HEK293T (cell line): ENCODE measurements at regions of chr7 and their contacts with region 1.

Region 1: DNA sequence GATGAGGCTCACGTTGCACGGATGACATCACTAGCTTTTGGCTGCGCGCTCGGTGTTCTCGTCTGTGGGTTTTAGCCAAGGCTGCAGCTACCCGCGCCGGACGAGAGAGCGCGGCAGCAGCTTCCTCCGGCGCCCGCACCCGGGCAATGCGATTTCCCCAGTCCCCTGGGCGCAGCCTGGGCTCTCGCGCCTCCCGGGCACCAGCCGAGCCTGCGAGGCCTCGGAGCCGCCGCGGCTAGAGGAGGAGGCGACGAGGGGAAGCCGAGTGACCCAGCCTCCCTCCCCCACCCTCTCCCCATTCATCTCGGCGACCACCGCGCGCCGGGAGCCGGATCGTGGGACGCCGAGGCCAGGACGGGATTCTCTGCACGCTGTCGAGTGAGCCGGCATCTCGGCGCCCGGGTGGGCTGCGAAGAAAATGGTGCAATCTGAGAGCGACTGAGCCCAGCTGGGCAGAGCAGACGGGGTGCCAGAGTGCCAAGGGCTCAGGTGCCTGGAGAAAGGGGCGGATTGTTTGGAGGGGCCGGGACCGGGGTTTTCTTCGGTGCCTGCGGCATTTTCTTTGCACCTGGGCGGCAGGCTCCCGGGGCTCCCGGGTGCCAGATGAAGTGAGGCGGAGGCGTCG is 1.2 kb upstream of the TMEM178B start:
- DNase-seq: peak; percentile 76

Region 2: DNA sequence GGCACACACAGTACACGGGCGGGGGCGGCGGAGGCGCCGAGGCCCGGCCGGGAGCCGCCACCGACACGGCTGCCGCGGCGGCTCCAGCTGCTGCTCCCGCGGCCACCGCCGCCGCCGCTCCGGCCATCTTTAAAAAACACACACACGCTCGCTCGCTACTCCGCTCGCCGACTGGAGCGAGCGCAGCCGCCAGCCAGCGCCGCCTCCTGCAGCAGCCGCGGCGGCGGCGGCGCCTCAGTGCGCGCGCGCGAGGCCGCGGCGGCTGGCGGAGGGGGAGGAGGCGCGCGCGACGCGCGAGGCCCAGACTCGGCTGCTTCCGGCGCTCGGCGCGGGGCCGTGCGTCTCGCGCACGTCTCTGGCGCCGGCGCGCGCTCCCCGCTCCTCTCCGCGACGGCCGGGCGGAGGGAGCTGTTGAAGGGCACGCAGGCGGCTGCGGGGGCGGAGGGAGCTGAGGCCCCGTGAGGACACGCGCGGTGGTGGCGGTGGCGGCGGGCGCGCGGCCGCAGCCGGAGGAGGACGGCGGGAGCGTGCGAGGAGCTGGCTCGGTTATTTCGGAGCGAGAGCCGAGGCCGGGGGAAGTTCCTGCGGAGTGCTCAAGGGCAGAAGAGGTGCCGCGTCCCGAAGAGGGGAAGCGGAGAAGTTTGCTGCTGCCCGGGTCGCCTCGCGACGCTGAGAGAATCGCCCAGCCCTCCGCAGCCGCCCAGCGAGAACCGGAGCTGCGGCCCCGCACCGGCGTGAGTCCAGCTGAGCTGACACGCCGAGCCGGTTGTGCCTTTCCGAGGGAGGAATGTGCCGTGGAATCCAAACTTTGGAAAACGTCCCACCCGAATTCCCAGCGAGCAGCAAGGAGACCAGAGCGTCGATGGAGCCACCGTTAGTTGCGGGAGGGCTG is 895.6 kb before region 1 on chr7 and contains the start of gene KDM7A:
- CTCF ChIA-PET with region 1: no interaction called
- POLR2A ChIA-PET with region 1: no interaction called
- DNase-seq: peak; percentile 95

Region 3: GRCh38 chr7:141014524-141015395 is 57.9 kb before region 1 on chr7 and contains the start of gene MRPS33:
- CTCF ChIA-PET with region 1: interaction called, 5 read pairs
- POLR2A ChIA-PET with region 1: interaction called, 50 read pairs
- DNase-seq: peak; percentile 100

Region 4: GRCh38 chr7:141220263-141220880 is 147.7 kb after region 1 on chr7:
- CTCF ChIA-PET with region 1: interaction called, 6 read pairs
- POLR2A ChIA-PET with region 1: interaction called, 10 read pairs
- DNase-seq: peak; percentile 77